Right cardiac atrium (tissue), 5 donors: ENCODE measurements at regions of chr6 and their contacts with region 1.

Region 1: DNA sequence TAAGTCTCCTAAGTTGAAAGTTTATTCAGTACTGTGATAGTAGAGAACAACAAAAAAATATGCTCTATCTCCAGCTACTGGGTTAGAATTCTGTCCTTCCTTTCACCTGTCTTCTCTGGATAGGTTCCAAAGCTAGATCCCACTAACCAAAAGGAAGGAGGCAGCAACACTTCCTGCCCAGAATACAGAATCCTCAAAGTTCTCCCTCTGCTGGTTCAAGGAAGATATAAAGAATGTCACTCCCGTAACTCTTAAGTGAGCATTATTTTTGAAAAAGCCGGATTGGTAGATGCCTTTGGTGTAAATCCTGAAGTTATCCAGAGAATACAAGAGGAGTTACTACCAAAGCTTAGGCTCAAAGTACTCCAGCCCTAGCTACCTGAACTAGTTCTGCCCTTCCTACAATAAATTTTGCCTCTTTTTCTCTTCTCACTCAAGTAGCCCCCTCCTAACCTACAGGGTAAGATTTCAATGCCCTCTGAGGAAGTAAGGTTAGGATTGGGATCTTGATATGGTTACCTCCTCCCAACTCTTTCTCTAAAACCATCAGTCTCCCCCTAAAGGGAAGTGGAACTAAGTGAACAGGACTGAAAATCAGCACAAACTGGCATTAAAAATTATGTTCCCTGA is 26.0 kb upstream of the CRIP3 start:
- DNase-seq: no peak
- ATAC-seq: peak; percentile 68 to 77
- H3K4me3 ChIP-seq: no peak overlapping the region
- H3K27ac ChIP-seq: no peak overlapping the region
- H3K4me1 ChIP-seq: no peaks in the 10 kb centered on the region
- H3K27me3 ChIP-seq: no peaks in the 10 kb centered on the region

Region 2: GRCh38 chr6:43263314-43264178 is 71.0 kb before region 1 on chr6:
- intact Hi-C with region 1: loop called (anchors 5 to 10 kb)
- DNase-seq: peak; percentile 73 to 90 (median 87)
- ATAC-seq: peak; percentile 79 to 82
- H3K4me3 ChIP-seq: no peak overlapping the region
- H3K27ac ChIP-seq: no peak overlapping the region
- H3K4me1 ChIP-seq: peaks cover 8% of the 10 kb centered on the region
- H3K27me3 ChIP-seq: no peaks in the 10 kb centered on the region